PC-3 (cell line): ENCODE measurements at regions of chr19 and their contacts with region 1.

Region 1: DNA sequence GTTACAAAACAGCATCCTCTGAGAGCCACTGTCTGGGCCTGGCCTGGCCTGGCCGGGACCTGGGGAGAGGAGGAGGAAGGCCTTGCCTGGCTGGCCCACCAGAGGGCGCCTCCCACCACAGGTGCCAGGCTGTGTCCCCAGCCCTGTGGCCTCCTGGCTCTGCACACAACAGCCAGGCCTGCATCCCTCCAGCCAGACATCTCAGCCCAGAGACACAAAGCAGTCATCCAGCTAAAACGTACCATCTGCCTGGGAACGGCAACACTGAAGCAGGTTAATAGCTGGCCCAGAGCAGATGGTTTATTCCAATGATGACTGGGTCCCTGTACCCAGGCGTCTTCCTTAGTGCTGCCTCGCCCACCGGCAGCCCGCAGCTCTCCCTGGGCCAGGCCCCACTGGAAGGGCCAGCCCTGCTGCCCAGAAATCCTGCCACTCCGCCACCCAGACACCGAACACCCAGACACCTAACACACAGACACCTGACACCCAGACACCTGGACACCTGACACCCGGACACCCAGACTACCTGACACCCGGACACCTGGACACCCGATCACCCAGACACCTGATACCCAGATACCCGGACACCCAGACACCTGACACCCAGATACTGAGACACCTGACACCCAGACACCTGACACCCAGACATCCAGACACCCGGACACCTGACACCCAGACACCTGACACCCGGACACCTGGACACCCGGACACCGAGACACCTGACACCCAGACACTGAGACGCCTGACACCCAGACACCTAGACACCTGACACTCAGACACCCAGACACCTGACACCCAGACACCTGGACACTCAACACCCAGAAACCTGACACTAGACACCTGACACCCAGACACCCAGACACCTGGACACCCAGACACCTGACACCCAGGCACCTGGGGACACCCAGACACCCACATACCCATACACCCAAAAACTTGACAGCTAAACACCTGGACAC is 20.1 kb downstream of the C19orf12 start:
- DNase-seq: peak; percentile 56
- ATAC-seq: peak; percentile 96
- H3K4me3 ChIP-seq: no peak overlapping the region
- H3K27ac ChIP-seq: no peak overlapping the region
- H3K4me1 ChIP-seq: no peaks in the 10 kb centered on the region
- H3K27me3 ChIP-seq: no peaks in the 10 kb centered on the region
- CTCF ChIP-seq: peak; percentile 76

Region 2: DNA sequence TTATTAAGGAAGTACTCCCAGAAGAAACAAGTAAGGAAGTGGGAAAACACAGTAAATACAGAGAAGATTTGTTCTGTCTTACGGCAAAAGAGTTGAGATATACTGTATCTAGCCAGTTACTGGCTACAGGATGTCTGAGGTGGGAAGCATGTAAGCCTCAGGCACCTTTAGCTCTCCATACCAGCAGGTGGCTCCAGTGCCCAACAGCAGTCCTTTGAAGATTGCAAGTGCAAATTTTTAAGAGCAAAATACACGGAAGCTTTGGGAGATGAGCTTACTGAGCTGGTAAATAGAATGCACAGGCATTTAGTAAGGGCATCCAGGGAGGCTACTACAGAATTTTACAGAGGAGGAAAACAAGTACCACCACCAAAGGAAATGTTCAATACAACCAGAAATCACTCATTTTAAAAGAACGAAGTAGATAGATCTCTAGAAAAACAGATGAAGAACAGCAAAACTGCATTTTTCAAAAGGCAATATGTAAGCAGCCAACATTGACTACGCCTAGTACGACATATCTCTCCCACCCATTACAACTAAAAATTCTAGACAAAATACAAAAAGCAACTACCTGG is 227.0 kb before region 1 on chr19:
- CTCF ChIA-PET with region 1: no interaction called
- POLR2A ChIA-PET with region 1: no interaction called
- intact Hi-C with region 1: loop called (anchors 10 kb)
- DNase-seq: peak; percentile 54
- ATAC-seq: peak; percentile 69
- H3K4me3 ChIP-seq: no peak overlapping the region
- H3K27ac ChIP-seq: no peak overlapping the region
- H3K4me1 ChIP-seq: no peaks in the 10 kb centered on the region
- H3K27me3 ChIP-seq: no peaks in the 10 kb centered on the region; the same call in 1 of the 2 replicates
- CTCF ChIP-seq: peak; percentile 67

Region 3: DNA sequence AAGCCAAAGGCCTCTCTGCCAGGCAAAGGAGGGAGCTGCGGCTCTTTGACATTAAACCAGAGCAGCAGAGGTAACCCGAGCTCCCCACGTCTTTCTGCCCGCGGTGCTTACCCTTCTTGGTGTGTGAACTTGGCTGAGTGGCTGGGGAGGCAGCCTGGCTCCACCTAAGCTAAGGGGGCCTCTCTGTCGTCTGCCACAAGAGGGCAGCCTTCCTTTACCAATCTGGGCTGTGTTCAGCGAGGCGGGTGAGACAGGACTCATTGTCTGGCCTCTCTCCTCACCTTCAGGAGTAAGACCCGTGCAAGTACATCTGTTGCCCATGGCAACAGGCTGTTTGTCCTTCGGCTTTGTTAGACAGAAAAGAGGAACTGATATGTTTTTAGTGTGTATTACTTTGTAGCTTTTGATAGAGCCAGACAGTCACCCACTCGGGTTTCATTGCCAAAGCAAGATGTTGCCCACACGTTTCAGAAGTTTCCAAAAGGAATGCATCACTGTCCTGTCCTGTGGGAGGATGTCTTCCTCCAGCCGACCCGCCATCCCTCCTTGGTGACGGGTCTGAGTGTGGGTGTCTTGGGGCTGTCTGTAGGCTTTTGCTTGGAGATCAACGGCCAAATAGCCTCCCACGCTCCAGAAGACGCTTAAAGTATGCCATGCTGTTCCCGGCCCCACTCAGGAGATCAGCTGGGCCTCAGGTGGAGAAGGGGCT is 84.2 kb before region 1 on chr19:
- CTCF ChIA-PET with region 1: no interaction called
- POLR2A ChIA-PET with region 1: interaction called, 3 read pairs
- intact Hi-C with region 1: loop called (anchors 1 kb)
- DNase-seq: peak; percentile 70
- ATAC-seq: peak; percentile 85
- H3K4me3 ChIP-seq: no peak overlapping the region
- H3K27ac ChIP-seq: no peak overlapping the region
- H3K4me1 ChIP-seq: peaks cover 3% of the 10 kb centered on the region; the same call in 1 of the 2 replicates
- H3K27me3 ChIP-seq: no peaks in the 10 kb centered on the region
- CTCF ChIP-seq: peak; percentile 82

Region 4: GRCh38 chr19:29667901-29668341 is 27.0 kb before region 1 on chr19:
- CTCF ChIA-PET with region 1: no interaction called
- POLR2A ChIA-PET with region 1: no interaction called
- intact Hi-C with region 1: no loop called
- DNase-seq: no peak
- ATAC-seq: no peak
- H3K4me3 ChIP-seq: no peak overlapping the region
- H3K27ac ChIP-seq: no peak overlapping the region
- H3K4me1 ChIP-seq: peaks cover 39% of the 10 kb centered on the region
- H3K27me3 ChIP-seq: no peaks in the 10 kb centered on the region
- CTCF ChIP-seq: no peak

Region 5: DNA sequence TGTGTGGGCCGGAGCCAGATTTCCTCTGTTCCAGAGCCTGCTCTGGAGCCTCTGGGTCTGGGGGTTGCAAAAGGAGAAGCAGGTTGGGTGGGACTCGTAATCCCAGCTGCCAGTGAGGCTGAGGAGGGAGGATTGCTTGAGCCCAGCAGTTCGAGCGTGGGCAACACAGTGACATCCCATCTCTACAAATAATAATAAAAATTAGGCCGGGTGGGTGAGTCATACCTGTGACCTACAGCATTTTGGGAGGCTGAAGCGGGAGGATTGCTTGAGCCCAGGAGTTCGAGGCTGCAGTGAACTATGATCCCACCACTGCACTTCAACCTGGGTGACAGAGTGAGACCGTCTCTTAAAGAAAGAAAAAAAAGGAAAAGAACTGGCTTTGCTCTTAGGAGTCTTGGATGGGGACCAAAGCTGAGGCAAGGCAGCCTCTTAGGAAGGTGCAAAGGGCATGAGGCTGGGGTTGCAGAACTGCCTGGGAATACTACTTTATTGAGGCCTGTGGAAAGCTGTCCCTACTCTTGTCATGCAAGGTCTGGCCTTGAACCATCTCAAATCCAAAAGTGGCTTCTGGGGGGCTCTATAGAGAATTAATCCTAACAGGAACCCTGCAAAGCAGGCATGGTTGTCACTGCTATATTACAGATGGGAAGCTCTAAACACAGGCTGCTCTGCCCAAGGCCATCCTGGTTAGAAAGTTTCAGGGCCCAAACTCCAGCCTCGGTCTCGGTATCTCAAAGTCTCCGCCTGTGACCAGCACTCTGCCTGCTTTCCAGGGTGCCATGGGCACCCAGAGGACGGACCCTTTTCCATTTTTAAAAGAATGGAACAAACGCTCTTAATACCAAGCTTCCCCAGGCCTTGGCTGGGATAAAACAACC is 21.0 kb after region 1 on chr19:
- CTCF ChIA-PET with region 1: interaction called, 3 read pairs
- POLR2A ChIA-PET with region 1: interaction called, 4 read pairs
- intact Hi-C with region 1: loop called (anchors 1 kb)
- DNase-seq: peak; percentile 31
- ATAC-seq: peak; percentile 33
- H3K4me3 ChIP-seq: peak overlapping the region; percentile 80
- H3K27ac ChIP-seq: peak overlapping the region; percentile 54
- H3K4me1 ChIP-seq: peaks cover 10% of the 10 kb centered on the region
- H3K27me3 ChIP-seq: no peaks in the 10 kb centered on the region
- CTCF ChIP-seq: no peak